ENCODE measurements at regions of chr22 and their contacts with region 1.

Region 1: GRCh38 chr22:20916983-20917810 is at the start of gene CRKL:
- DNase-seq: peak; percentile 98
- H3K4me3 Mint-ChIP-seq: peak within 1 kb of the TSS; percentile 99
- H3K27ac Mint-ChIP-seq: peak within 1 kb of the TSS; percentile 88
- H3K4me1 Mint-ChIP-seq: peaks cover 28% of the 10 kb centered on the region
- H3K27me3 Mint-ChIP-seq: no peaks in the 10 kb centered on the region
- total RNA-seq, gene CRKL: 65.1 to 65.7 TPM

Region 2: GRCh38 chr22:20858615-20859416 is 58.4 kb before region 1 on chr22 and contains the starts of genes PI4KA and SNAP29:
- CTCF ChIA-PET with region 1: no interaction called
- POLR2A ChIA-PET with region 1: interaction called, 3 read pairs
- intact Hi-C with region 1: loop called (anchors 1 kb)
- DNase-seq: peak; percentile 98
- H3K4me3 Mint-ChIP-seq: peak within 1 kb of the TSS; percentile 86
- H3K27ac Mint-ChIP-seq: peak within 1 kb of the TSS; percentile 45
- H3K4me1 Mint-ChIP-seq: peaks cover 49% of the 10 kb centered on the region
- H3K27me3 Mint-ChIP-seq: no peaks in the 10 kb centered on the region
- total RNA-seq, gene PI4KA: 57.9 to 58.9 TPM
- total RNA-seq, gene SNAP29: 28.2 to 29.1 TPM

Region 3: GRCh38 chr22:20965104-20965887 is 48.1 kb after region 1 on chr22:
- CTCF ChIA-PET with region 1: interaction called, 3 read pairs
- POLR2A ChIA-PET with region 1: no interaction called
- intact Hi-C with region 1: loop called (anchors 5 kb)
- DNase-seq: no peak
- H3K4me3 Mint-ChIP-seq: peak overlapping the region; percentile 20
- H3K27ac Mint-ChIP-seq: no peak overlapping the region
- H3K4me1 Mint-ChIP-seq: peaks cover 11% of the 10 kb centered on the region
- H3K27me3 Mint-ChIP-seq: peaks cover 8% of the 10 kb centered on the region

Region 4: DNA sequence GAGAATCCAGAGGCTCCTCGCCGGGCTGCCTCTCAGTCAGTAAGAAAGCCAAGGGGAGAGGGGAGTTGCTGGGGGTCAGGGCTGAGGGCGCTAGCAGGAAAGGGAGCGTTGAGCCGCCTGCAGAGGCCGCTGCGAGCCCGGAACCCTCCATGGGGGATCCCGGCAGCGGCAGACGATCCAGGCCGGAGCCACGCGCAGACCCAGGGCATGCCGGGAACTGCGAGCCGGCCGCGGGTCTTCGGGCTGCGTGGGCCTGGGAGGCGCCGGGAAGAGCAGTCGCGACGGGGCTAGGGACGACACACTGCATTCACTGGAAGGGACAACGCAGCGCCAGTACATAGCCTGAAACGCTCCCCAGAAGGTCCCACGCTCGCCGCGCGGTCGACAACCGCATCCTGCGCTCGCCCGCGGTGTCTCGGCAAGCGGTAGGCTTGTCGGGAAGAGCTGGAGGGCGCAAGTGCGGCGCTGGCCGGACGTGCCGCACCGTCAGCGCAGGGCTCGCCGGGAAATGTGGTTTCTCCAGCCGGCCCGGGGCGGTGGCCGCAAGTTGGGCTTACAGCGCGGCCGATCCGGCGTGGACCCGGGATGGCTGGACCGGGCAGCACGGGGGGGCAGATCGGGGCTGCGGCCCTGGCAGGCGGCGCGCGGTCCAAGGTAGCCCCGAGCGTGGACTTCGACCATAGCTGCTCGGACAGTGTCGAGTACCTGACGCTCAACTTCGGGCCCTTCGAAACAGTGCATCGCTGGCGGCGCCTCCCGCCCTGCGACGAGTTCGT is 64.8 kb after region 1 on chr22 and contains the start of gene LZTR1:
- CTCF ChIA-PET with region 1: no interaction called
- POLR2A ChIA-PET with region 1: no interaction called
- intact Hi-C with region 1: loop called (anchors 1 kb)
- DNase-seq: peak; percentile 83
- H3K4me3 Mint-ChIP-seq: peak within 1 kb of the TSS; percentile 95
- H3K27ac Mint-ChIP-seq: peak within 1 kb of the TSS; percentile 88
- H3K4me1 Mint-ChIP-seq: peaks cover 43% of the 10 kb centered on the region
- H3K27me3 Mint-ChIP-seq: no peaks in the 10 kb centered on the region
- total RNA-seq, gene LZTR1: 39.3 to 43.4 TPM

Region 5: GRCh38 chr22:21001560-21002325 is 84.5 kb after region 1 on chr22 and contains the start of gene THAP7:
- CTCF ChIA-PET with region 1: no interaction called
- POLR2A ChIA-PET with region 1: no interaction called
- intact Hi-C with region 1: loop called (anchors 1 kb)
- DNase-seq: peak; percentile 98
- H3K4me3 Mint-ChIP-seq: peak within 1 kb of the TSS; percentile 94
- H3K27ac Mint-ChIP-seq: peak within 1 kb of the TSS; percentile 97
- H3K4me1 Mint-ChIP-seq: peaks cover 21% of the 10 kb centered on the region
- H3K27me3 Mint-ChIP-seq: no peaks in the 10 kb centered on the region
- total RNA-seq, gene THAP7: 22.1 to 26.8 TPM